T-cell (primary cell): ENCODE measurements at regions of chr3 and their contacts with region 1.

Region 1: DNA sequence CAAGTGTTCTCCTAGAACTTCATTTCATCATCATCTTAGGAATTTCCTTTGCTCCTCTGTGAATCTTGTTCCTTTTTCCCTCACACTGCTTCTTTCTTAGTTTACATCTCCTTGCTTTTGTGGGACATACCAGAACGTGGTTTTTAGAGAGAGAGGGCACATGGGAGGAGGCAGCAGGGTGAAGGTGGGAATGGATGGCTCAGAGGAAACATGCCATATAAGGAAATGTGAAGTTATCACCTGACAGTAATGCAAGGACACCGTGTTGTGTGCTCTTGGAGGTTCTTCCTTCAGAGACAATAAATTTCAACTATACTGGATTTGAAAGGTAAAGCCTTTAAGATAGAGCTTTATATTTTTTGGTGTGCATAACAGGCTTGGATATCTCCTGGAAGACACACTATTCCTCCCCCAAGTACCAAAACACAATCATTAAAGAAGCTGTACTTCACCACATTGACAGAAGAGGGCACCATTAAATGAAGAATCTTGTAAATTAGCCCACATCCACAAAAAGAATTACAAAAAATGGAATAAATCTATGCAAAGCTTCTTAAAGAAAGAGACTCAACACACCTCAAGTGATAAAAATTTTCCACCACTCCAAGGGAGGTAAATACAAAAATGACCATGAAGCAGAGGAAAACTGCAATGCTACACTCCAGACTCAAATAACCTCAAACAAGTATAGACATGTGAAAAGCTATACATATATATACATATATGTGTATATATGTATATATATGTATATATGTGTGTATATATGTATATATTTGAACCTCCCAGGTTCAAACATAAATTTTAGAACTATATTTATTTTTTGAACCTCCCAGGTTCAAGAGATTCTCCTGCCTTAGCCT is 26.1 kb downstream of the RPL39L start:
- DNase-seq: peak in 2 of 35 experiments; percentile 31 to 71
- ATAC-seq: peak in 3 of 4 experiments; percentile 52 to 64 (median 58)
- H3K4me3 ChIP-seq: no peak overlapping the region
- H3K4me3 Mint-ChIP-seq: no peak overlapping the region
- H3K27ac ChIP-seq: no peak overlapping the region
- H3K27ac Mint-ChIP-seq: no peak overlapping the region
- H3K4me1 ChIP-seq: peaks cover 0 to 4% of the 10 kb centered on the region in 2 experiments
- H3K4me1 Mint-ChIP-seq: peaks cover 6 to 9% (median 6%) of the 10 kb centered on the region in 3 donors
- H3K27me3 ChIP-seq: no peaks in the 10 kb centered on the region
- H3K27me3 Mint-ChIP-seq: no peaks in the 10 kb centered on the region

Region 2: GRCh38 chr3:187079090-187080022 is 33.8 kb before region 1 on chr3:
- CTCF ChIA-PET with region 1: no interaction called
- POLR2A ChIA-PET with region 1: no interaction called
- DNase-seq: no peak
- ATAC-seq: no peak
- H3K4me3 ChIP-seq: no peak overlapping the region
- H3K4me3 Mint-ChIP-seq: no peak overlapping the region
- H3K27ac ChIP-seq: no peak overlapping the region
- H3K27ac Mint-ChIP-seq: peak overlapping the region; percentile 27 to 68
- H3K4me1 ChIP-seq: no peaks in the 10 kb centered on the region
- H3K4me1 Mint-ChIP-seq: peaks cover 8 to 12% (median 9%) of the 10 kb centered on the region in 3 donors
- H3K27me3 ChIP-seq: no peaks in the 10 kb centered on the region
- H3K27me3 Mint-ChIP-seq: no peaks in the 10 kb centered on the region

Region 3: GRCh38 chr3:187101184-187102072 is 11.7 kb before region 1 on chr3:
- CTCF ChIA-PET with region 1: interaction called, 20 to 27 read pairs
- POLR2A ChIA-PET with region 1: interaction called in 1 of 2 experiments, 3 read pairs
- DNase-seq: peak in 34 of 35 experiments; percentile 1 to 68 (median 42)
- ATAC-seq: peak; percentile 68 to 86 (median 80)
- H3K4me3 ChIP-seq: peak overlapping the region; percentile 19 to 42
- H3K4me3 Mint-ChIP-seq: peak overlapping the region; percentile 53 to 65 (median 64)
- H3K27ac ChIP-seq: peak overlapping the region; percentile 54
- H3K27ac Mint-ChIP-seq: peak overlapping the region; percentile 71 to 88
- H3K4me1 ChIP-seq: peaks cover 9 to 14% of the 10 kb centered on the region in 2 experiments
- H3K4me1 Mint-ChIP-seq: peaks cover 18 to 50% (median 30%) of the 10 kb centered on the region in 3 donors
- H3K27me3 ChIP-seq: no peaks in the 10 kb centered on the region
- H3K27me3 Mint-ChIP-seq: no peaks in the 10 kb centered on the region

Region 4: GRCh38 chr3:187130346-187131066 is 17.3 kb after region 1 on chr3:
- CTCF ChIA-PET with region 1: interaction called, 11 to 18 read pairs
- POLR2A ChIA-PET with region 1: no interaction called
- DNase-seq: peak in 25 of 35 experiments; percentile 11 to 86 (median 26)
- ATAC-seq: peak; percentile 97 to 100 (median 99)
- H3K4me3 ChIP-seq: peak overlapping the region in 1 of 2 donors; percentile 16
- H3K4me3 Mint-ChIP-seq: peak overlapping the region; percentile 51 to 71 (median 64)
- H3K27ac ChIP-seq: peak overlapping the region; percentile 97
- H3K27ac Mint-ChIP-seq: peak overlapping the region; percentile 97 to 98
- H3K4me1 ChIP-seq: peaks cover 6 to 13% of the 10 kb centered on the region in 2 experiments
- H3K4me1 Mint-ChIP-seq: peaks cover 22 to 41% (median 40%) of the 10 kb centered on the region in 3 donors
- H3K27me3 ChIP-seq: no peaks in the 10 kb centered on the region
- H3K27me3 Mint-ChIP-seq: no peaks in the 10 kb centered on the region

Region 5: GRCh38 chr3:187139126-187139894 is 26.1 kb after region 1 on chr3 and contains the start of gene RPL39L:
- CTCF ChIA-PET with region 1: interaction called, 16 to 61 read pairs
- POLR2A ChIA-PET with region 1: interaction called in 1 of 2 experiments, 7 read pairs
- DNase-seq: peak; percentile 85 to 96 (median 90)
- ATAC-seq: peak; percentile 96 to 99 (median 97)
- H3K4me3 ChIP-seq: peak within 1 kb of the TSS; percentile 54 to 65
- H3K4me3 Mint-ChIP-seq: peak within 1 kb of the TSS; percentile 85 to 88 (median 85)
- H3K27ac ChIP-seq: peak within 1 kb of the TSS; percentile 84
- H3K27ac Mint-ChIP-seq: peak within 1 kb of the TSS; percentile 87 to 92
- H3K4me1 ChIP-seq: peaks cover 0 to 16% of the 10 kb centered on the region in 2 experiments
- H3K4me1 Mint-ChIP-seq: peaks cover 18 to 21% (median 20%) of the 10 kb centered on the region in 3 donors
- H3K27me3 ChIP-seq: no peaks in the 10 kb centered on the region
- H3K27me3 Mint-ChIP-seq: no peaks in the 10 kb centered on the region
- total RNA-seq, gene RPL39L: 0.85 to 3.8 (median 2.1) TPM

Region 6: GRCh38 chr3:187150599-187150998 is 37.4 kb after region 1 on chr3:
- CTCF ChIA-PET with region 1: interaction called, 29 to 61 read pairs
- POLR2A ChIA-PET with region 1: no interaction called
- DNase-seq: peak; percentile 18 to 71 (median 53)
- ATAC-seq: peak in 3 of 4 experiments; percentile 45 to 58 (median 55)
- H3K4me3 ChIP-seq: no peak overlapping the region
- H3K4me3 Mint-ChIP-seq: no peak overlapping the region
- H3K27ac ChIP-seq: no peak overlapping the region
- H3K27ac Mint-ChIP-seq: peak overlapping the region; percentile 13 to 28
- H3K4me1 ChIP-seq: peaks cover 0 to 5% of the 10 kb centered on the region in 2 experiments
- H3K4me1 Mint-ChIP-seq: peaks cover 7 to 14% (median 8%) of the 10 kb centered on the region in 3 donors
- H3K27me3 ChIP-seq: peaks cover 0 to 9% of the 10 kb centered on the region in 2 experiments
- H3K27me3 Mint-ChIP-seq: peaks cover 3 to 7% of the 10 kb centered on the region in 2 donors